Vagina (tissue), 2 donors: ENCODE measurements at regions of chr6 and their contacts with region 1.

Region 1: DNA sequence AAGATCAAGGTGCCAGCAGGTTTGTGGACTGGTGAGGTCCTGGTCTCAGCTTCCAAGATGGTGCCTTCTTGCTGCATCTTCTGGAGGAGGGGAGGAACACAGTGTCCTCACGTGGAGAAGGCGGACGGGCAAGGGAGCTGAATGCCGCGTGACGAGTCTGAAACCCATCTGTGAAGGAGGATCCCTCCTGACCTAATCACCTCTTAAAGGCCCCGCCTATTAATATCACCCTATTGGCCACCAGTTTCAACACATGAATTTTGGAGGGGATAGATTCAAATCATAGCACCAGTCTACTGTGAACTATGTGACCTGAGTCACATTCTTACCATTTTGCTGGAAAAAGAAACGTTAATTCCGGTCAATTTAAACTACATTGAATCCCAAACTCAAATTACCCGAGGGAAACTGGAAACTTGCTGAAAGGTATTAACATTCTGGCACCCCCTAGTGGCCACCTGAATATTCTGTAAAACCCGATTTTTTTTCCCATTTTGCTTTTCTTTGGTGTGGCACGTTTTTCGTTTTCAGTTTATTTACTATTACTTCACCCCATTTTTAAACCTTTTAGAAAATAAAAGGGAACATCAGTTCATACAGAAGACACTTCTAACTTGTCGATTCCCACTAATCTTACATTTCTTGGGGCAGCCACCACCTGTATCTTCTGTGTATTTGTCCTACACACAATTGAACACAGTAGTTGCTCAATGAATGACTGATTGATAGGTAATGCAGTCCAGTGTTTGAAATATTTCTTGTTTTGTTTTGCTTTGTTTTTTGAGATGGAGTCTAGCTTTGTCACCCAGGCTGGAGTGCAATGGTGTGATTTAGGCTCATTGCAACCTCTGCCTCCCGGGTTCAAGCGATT is 17.9 kb upstream of the CCDC170 start:
- DNase-seq: no peak
- H3K4me3 ChIP-seq: no peak overlapping the region
- H3K27ac ChIP-seq: no peak overlapping the region
- H3K4me1 ChIP-seq: peaks cover 8% of the 10 kb centered on the region
- H3K27me3 ChIP-seq: no peaks in the 10 kb centered on the region
- CTCF ChIP-seq: peak; percentile 12 to 77 (median 57)
- POLR2A ChIP-seq: no peak

Region 2: GRCh38 chr6:151440930-151441329 is 35.0 kb before region 1 on chr6:
- intact Hi-C with region 1: loop called (anchors 5 kb)
- DNase-seq: no peak
- H3K4me3 ChIP-seq: no peak overlapping the region
- H3K27ac ChIP-seq: peak overlapping the region; percentile 44
- H3K4me1 ChIP-seq: peaks cover 24% of the 10 kb centered on the region
- H3K27me3 ChIP-seq: no peaks in the 10 kb centered on the region
- CTCF ChIP-seq: peak; percentile 17 to 44 (median 25)
- POLR2A ChIP-seq: no peak